GM10248 (cell line): ENCODE measurements at regions of chr1 and their contacts with region 1.

Region 1: DNA sequence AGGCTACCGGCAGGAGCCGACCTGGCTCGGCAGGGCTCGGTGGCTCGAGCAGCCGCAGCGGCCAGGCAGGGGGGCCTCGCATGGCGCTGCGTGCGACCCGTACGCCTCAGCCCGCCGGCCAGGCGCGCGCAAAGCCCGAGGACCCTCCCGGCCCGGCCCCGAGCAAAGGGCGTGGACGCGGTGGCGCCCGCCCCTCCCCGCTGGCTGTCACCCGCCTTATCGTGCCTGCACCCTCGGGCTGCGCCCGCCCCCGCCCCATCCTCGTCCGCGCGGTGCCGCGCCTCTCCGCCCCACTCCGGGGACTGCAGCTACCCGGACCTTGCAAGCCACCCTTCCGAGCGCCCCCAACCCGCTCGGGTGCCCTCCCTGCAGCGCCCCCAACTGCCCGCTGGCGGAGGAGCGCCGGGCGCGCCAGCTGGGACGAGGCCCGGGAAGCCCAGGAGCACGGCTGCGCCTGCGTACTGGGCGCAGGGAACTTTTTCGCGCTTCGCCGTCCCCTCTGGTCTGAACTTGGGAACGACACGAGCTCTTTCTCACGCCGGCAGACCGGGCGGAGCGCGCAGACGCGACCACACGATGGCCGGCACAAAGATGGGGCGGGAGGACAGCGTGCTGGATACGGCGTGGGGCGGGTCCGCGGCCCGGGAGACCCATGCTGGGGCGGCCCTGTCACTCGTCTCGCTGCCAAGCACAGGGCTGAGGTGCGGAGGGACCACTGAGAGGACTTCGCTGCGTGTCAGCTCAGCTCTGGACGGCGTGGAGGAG is at the start of gene ABCB10:
- DNase-seq: peak; percentile 97
- CTCF ChIP-seq: peak; percentile 88

Region 2: GRCh38 chr1:229538945-229539344 is 19.8 kb before region 1 on chr1:
- CTCF ChIA-PET with region 1: interaction called, 13 read pairs
- POLR2A ChIA-PET with region 1: no interaction called
- DNase-seq: no peak
- CTCF ChIP-seq: no peak

Region 3: DNA sequence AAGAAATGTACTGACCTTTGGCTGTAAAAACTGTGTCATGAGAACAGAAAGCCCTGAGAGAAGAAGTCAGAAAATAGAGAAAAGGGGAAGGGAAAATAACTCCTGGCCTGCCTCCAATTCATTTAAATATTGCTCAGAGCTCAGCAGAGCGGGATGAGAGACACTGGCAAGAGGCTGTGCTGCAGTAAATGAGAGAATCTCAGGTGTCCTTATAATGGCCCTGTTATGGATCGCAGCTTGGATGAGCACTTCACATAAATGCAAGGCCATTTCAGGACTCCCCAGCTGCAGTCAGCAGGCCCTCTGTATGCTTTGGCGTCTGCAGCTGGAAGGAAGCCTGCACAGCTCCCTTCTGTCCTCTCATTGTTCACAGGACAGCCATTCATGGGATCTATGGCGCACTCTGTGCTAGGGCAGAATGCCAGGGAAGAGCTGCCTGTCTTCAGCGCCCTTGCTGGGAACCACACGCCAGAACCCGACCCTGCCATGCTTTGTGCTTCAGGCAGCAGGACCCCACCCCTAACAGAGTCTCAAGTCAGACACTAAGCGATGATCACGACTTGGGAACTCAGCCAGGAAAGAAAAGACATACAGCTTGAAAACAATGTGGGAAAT is 20.4 kb after region 1 on chr1:
- CTCF ChIA-PET with region 1: interaction called, 12 read pairs
- POLR2A ChIA-PET with region 1: no interaction called
- DNase-seq: peak; percentile 63
- CTCF ChIP-seq: no peak

Region 4: DNA sequence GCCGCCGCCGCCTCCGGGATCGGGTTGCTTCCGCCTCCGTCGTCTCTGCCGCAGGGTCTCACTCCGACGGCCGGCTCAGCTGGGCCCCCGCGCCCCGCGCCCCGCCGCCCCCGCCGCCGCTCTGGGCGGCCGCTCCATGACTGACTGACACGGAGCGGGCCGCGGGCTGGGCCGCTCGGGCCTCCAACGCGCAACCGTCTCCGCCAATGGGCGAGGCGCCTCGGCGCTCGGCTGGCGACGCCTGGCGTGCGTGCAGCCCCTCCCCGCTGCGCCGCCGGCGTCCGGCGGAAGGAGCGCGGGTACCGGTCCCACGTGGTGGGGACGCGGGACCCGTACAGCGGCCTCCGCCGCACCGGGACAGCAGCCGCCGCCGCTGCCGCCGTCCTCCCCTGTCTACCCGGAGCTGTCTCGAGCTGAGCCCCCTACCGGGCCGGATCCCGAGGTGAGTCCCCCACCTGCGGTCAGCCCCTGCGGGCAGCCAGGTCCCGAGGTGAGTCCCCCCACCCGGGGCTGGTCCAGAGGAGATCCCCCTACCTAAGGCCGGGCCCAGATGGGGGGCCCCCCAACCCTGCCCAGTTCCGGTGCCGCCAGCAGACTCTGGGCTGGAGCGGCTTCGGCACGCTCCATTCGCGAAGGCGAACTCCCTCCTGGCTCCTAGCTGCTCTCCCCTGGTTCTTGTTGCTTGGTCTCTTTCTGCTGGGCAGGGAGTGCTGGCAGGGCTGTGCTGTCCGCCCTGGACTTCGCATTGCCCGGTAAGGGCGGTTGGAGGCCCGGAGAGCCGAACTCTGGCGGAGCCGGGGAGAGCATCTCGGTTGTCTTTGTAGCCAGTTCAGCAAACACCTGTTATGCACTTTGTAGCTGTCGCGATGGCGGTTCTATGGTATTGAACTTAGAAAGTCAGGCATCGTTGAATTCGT is 67.4 kb after region 1 on chr1 and contains the starts of genes TAF5L and URB2:
- CTCF ChIA-PET with region 1: interaction called, 20 read pairs
- POLR2A ChIA-PET with region 1: no interaction called
- DNase-seq: peak; percentile 96
- CTCF ChIP-seq: no peak